HEK293T (cell line): ENCODE measurements at regions of chr5 and their contacts with region 1.

Region 1: DNA sequence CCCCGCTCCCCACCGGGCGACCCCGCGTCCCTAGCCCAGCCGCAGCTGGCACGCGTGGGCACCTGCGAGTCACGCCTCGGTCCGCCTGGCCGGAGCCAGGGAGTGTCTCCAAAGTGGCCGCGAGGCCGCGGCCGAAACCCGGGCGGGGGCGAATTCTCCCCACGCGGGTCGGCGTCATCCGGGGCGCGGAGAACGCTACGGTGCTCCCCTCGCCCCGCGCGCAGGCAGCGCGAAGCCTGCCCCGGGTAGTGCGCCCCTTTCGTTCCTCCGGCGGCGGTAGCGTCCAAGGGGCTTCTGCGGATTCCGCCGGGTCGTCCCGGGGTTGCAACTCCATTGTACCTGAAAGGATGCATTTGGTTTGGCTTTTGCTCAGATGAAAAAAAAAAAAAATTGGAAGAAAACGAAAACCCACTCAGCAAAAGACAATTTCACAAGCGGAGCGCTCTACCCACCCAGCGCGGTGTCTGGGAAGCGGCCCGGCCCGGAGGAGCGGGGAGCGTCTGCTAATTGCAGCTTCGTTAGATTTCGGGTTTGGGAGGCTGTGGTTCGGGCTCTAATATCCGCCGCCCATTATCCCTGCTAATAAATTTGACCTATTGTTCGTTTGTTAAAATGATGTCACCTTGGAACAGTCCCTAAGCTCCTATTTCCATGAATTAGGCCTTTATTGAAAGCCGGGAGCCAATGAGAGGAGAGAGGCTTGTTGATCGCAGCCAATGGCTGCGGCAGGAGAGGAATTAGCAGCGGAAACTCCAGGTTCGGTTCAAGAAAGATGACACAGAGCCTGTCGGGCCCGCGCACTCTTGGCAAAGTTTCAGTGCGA is at the start of gene TLX3:
- DNase-seq: peak; percentile 89

Region 2: DNA sequence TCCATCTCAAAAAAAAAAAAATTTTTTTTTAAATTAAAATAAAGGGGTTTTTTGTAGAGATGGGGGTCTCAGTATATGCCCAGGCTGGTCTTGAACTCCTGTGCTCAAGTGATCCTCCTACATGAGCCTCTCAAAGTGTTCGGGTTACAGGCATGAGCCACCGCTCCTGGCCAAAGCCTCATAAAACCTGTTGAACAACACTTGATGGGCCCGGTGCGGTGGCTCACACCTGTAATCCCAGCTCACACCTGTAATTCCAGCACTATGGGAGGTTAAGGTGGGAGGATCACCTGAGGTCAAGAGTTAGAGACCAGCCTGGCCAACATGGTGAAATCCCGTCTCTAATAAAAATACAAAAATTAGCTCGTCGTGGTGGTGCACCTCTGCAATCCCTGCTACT is 71.3 kb after region 1 on chr5:
- CTCF ChIA-PET with region 1: no interaction called
- POLR2A ChIA-PET with region 1: no interaction called
- DNase-seq: no peak

Region 3: DNA sequence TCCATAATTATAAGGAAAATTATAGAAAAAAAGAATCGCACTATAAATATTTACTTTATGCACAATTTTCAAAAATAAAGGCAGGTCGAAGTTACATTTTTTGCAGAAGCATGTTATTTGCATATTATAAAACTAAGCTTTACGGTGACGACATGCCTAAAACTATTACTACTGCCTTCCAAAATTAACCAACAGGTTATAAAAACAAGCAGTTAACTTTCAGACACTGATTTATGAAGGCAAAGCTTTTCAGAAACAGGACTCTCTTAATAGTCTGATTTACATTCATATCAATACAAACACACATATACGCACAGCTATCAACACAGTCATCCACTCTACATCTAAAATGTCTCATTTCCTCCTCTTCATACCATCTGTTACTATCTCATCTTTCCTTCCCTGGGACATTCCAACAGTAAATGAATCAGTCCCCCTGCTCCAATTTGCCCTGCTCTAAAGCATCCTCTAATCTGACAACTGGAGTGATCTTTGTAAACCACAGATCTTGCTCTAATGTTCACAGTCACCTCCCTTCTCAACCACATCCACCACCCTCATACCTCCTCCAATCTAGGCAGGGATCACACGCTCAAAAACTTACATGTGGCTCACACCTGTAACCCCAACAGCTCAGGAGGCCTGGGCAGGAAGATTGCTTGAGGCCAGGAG is 676.2 kb after region 1 on chr5:
- CTCF ChIA-PET with region 1: interaction called, 10 read pairs
- POLR2A ChIA-PET with region 1: no interaction called
- DNase-seq: no peak